ENCODE measurements at regions of chr2 and their contacts with region 1.

Region 1: GRCh38 chr2:217756375-217757107 is 246.3 kb downstream of the TNS1 start:
- DNase-seq: peak; percentile 72 to 89 (median 81)
- H3K4me3 ChIP-seq: peak overlapping the region in 1 of 4 donors; percentile 33
- H3K27ac ChIP-seq: peak overlapping the region in 1 of 5 donors; percentile 7
- H3K4me1 ChIP-seq: peaks cover 7 to 30% of the 10 kb centered on the region in 2 donors
- H3K27me3 ChIP-seq: no peaks in the 10 kb centered on the region
- CTCF ChIP-seq: peak; percentile 64 to 94 (median 80)
- POLR2A ChIP-seq: no peak

Region 2: GRCh38 chr2:216687646-216688045 is 1068.9 kb before region 1 on chr2:
- intact Hi-C with region 1: loop called in 1 of 2 experiments (anchors 10 kb)
- DNase-seq: no peak
- H3K4me3 ChIP-seq: no peak overlapping the region
- H3K27ac ChIP-seq: no peak overlapping the region
- H3K4me1 ChIP-seq: peaks cover 0 to 29% of the 10 kb centered on the region in 2 donors
- H3K27me3 ChIP-seq: no peaks in the 10 kb centered on the region
- CTCF ChIP-seq: peak in 2 of 6 experiments; percentile 15 to 23
- POLR2A ChIP-seq: no peak

Region 3: GRCh38 chr2:217643789-217644301 is 112.7 kb before region 1 on chr2:
- intact Hi-C with region 1: loop called in 1 of 2 experiments (anchors 10 kb)
- DNase-seq: no peak
- H3K4me3 ChIP-seq: no peak overlapping the region
- H3K27ac ChIP-seq: no peak overlapping the region
- H3K4me1 ChIP-seq: no peaks in the 10 kb centered on the region
- H3K27me3 ChIP-seq: no peaks in the 10 kb centered on the region
- CTCF ChIP-seq: no peak
- POLR2A ChIP-seq: no peak

Region 4: GRCh38 chr2:217650716-217651360 is 105.7 kb before region 1 on chr2:
- intact Hi-C with region 1: loop called (anchors 10 kb)
- DNase-seq: peak; percentile 28 to 61 (median 46)
- H3K4me3 ChIP-seq: no peak overlapping the region
- H3K27ac ChIP-seq: no peak overlapping the region
- H3K4me1 ChIP-seq: peaks cover 12 to 14% of the 10 kb centered on the region in 2 donors
- H3K27me3 ChIP-seq: no peaks in the 10 kb centered on the region
- CTCF ChIP-seq: peak; percentile 59 to 74 (median 64)
- POLR2A ChIP-seq: no peak

Region 5: GRCh38 chr2:217784996-217785543 is 28.5 kb after region 1 on chr2:
- intact Hi-C with region 1: no loop called
- DNase-seq: no peak
- H3K4me3 ChIP-seq: no peak overlapping the region
- H3K27ac ChIP-seq: peak overlapping the region in 1 of 5 donors; percentile 36
- H3K4me1 ChIP-seq: peaks cover 0 to 20% of the 10 kb centered on the region in 2 donors
- H3K27me3 ChIP-seq: no peaks in the 10 kb centered on the region
- CTCF ChIP-seq: no peak
- POLR2A ChIP-seq: no peak

Measured in adrenal gland (tissue), 19 donors.